Left cardiac atrium (tissue), 4 donors: ENCODE measurements at regions of chrX and their contacts with region 1.

Region 1: GRCh38 chrX:115330498-115331168 is 41.1 kb downstream of the LUZP4 start:
- DNase-seq: peak; percentile 27
- ATAC-seq: peak; percentile 49 to 55

Region 2: DNA sequence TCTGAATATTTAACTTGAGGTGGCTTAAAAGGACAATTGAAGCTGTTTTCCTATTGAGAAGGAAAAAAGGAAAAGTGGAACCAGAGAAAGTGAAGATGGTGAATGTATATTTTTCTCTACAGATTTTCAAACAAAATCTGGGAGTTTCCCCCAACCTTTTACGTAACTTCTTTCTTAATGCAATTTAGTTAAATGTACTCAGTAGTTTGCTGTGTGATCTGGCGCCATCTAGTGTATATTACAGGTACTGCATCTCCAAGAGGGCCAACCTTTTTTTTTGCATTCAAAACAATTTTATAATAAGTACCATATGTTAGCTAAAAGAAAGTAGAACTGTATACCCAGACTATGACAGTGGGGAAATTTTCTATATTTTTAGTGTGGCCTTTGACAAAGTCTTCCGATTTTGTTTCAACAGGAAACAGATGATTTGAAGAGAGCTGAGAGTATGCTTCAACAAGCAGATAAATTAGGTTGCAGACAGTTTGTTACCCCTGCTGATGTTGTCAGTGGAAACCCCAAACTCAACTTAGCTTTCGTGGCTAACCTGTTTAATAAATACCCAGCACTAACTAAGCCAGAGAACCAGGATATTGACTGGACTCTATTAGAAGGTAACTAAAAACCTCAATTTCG is 312.4 kb after region 1 on chrX:
- intact Hi-C with region 1: loop called (anchors 1 to 5 kb)
- DNase-seq: no peak
- ATAC-seq: no peak

Region 3: GRCh38 chrX:115690511-115691216 is 360.0 kb after region 1 on chrX:
- intact Hi-C with region 1: loop called in 1 of 2 experiments (anchors 5 kb)
- DNase-seq: peak; percentile 44
- ATAC-seq: peak; percentile 77 to 84